ENCODE measurements at regions of chr1 and their contacts with region 1.

Region 1: DNA sequence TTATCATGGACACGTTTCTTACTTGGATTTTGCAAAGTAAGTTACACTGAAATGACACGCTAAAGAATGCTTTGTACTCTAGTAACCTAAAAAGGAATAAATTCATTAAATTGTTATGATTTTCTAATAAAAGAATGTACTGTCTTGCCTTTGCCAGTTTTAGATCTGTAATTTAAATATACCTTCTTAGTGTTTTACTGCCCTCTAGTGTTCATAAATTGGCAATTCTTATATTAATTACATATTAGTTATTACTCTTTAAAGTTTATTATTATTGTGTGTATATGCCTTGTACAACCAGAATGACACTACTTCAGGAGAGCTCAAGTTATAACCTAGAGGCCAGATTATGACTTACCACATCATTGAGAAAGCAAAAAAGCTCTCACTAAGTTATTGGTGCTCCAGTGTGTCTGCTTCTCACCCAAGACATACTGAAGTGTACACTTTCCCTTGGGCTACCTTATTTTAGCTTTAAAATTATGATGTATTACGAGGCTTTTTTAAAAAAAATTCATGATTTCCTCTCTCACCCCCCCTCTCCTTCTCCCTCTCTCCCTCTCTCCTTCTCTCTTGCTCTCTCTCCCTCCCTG is 169.9 kb downstream of the HS2ST1 start:
- DNase-seq: no peak
- H3K4me3 ChIP-seq: no peak overlapping the region
- H3K27ac ChIP-seq: no peak overlapping the region
- H3K4me1 ChIP-seq: no peaks in the 10 kb centered on the region
- H3K27me3 ChIP-seq: no peaks in the 10 kb centered on the region
- CTCF ChIP-seq: no peak
- EP300 ChIP-seq: no peak
- POLR2A ChIP-seq: no peak
- RAD21 ChIP-seq: peak in 1 of 2 experiments; percentile 34; a peak in 3 of 4 replicates

Region 2: DNA sequence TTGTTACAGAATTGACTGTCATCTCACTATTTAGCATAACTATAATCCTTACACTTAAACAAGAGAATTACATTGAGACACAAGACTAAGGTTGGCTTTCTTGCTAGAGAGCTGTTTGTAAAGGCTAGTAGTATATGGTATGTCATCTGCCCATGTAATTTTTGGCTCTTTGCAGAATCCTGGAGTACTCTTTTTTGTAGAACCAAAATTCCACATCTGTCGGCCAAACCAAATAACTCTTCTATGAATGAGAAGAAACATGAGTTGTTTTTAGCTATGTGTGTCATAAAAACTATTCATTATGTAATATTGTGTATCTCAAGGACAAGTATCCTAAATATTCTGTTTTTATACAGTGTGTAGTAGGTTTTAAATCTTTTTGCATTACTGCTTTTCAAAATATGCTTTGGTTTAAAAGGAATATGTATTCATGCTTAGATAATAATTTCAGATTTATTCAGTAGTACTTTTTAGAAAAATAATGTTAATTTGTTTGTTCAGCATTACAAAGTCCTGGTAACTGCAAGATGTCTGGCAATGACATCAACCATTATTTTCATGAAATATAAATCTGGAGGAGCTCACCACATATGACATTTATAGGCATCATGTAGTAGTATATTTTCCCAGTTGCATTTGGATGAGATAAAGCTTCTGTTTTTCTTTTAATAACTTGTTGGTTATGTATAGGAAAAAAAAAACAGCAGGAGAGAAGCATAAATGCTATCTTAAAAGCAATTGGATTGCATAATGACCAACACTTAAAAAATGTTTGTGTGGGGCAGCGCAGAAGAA is 10.1 kb before region 1 on chr1:
- CTCF ChIA-PET with region 1: interaction called, 26 read pairs
- POLR2A ChIA-PET with region 1: no interaction called
- DNase-seq: no peak
- H3K4me3 ChIP-seq: no peak overlapping the region
- H3K27ac ChIP-seq: no peak overlapping the region
- H3K4me1 ChIP-seq: peaks cover 0 to 2% (median 0%) of the 10 kb centered on the region in 4 experiments; a peak in 1 of 7 replicates
- H3K27me3 ChIP-seq: no peaks in the 10 kb centered on the region
- CTCF ChIP-seq: no peak
- EP300 ChIP-seq: no peak
- POLR2A ChIP-seq: no peak
- RAD21 ChIP-seq: no peak

Region 3: GRCh38 chr1:87100271-87100670 is 15.9 kb after region 1 on chr1:
- CTCF ChIA-PET with region 1: interaction called, 30 read pairs
- POLR2A ChIA-PET with region 1: no interaction called
- DNase-seq: no peak
- H3K4me3 ChIP-seq: no peak overlapping the region
- H3K27ac ChIP-seq: no peak overlapping the region
- H3K4me1 ChIP-seq: peaks cover 0 to 3% (median 1%) of the 10 kb centered on the region in 4 experiments; a peak in 3 of 7 replicates
- H3K27me3 ChIP-seq: peaks cover 0 to 1% (median 0%) of the 10 kb centered on the region in 4 experiments; a peak in 1 of 7 replicates
- CTCF ChIP-seq: no peak
- EP300 ChIP-seq: no peak
- POLR2A ChIP-seq: no peak
- RAD21 ChIP-seq: no peak

Measured in H1 (cell line).